Activated CD8-positive, alpha-beta T cell treated with anti-CD3 and anti-CD28 coated beads for 36 hours (primary cell): ENCODE measurements at regions of chr7 and their contacts with region 1.

Region 1: DNA sequence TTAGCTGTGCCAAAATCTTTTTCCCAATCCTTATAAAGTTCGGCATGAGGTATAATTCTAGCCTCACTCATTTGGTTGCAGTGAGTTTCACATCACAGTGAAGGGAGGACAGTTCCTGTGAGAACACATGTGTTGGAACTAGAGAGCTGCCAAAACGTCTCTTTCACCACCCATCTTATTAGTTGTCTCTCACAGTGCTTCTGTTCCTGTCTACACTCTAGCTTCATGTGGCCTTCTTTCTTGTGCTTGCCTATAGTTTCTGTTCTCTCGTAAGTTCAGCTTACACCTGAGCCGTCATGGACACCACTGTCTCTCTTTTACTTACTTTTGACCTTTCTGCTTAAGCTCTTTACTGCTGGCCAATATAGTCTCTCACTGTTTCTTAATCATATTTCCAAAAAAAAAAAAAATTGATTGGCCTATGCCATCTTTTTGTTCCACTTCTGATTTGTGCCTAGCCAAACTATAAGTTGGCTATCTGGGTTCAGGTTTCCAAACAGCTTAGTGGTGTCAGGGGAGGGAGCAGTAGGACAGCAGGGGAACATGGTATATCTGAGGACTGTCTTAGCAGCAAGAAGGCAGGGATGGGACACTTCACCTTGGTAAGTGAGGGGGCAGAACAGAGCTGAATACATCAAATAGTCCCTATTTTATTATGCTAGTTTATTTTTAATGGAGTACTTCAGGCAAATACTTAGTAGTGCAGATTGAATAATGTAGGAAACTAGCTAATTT is 38.0 kb downstream of the ZNRF2 start:
- DNase-seq: peak; percentile 17
- ATAC-seq: peak; percentile 62
- H3K4me3 Mint-ChIP-seq: peak overlapping the region; percentile 72
- H3K27ac Mint-ChIP-seq: peak overlapping the region; percentile 96
- H3K4me1 Mint-ChIP-seq: peaks cover 60% of the 10 kb centered on the region
- H3K27me3 Mint-ChIP-seq: no peaks in the 10 kb centered on the region
- CTCF ChIP-seq: no peak

Region 2: GRCh38 chr7:30312178-30312577 is 10.3 kb before region 1 on chr7:
- CTCF ChIA-PET with region 1: interaction called, 18 read pairs
- POLR2A ChIA-PET with region 1: interaction called, 9 read pairs
- intact Hi-C with region 1: no loop called
- DNase-seq: no peak
- ATAC-seq: no peak
- H3K4me3 Mint-ChIP-seq: no peak overlapping the region
- H3K27ac Mint-ChIP-seq: no peak overlapping the region
- H3K4me1 Mint-ChIP-seq: peaks cover 56% of the 10 kb centered on the region
- H3K27me3 Mint-ChIP-seq: no peaks in the 10 kb centered on the region
- CTCF ChIP-seq: no peak